PC-3 (cell line): ENCODE measurements at regions of chr17 and their contacts with region 1.

Region 1: GRCh38 chr17:70137451-70138230 is 31.7 kb upstream of the KCNJ2 start:
- DNase-seq: peak; percentile 89
- ATAC-seq: peak; percentile 96
- H3K4me3 ChIP-seq: peak overlapping the region; percentile 67
- H3K27ac ChIP-seq: peak overlapping the region; percentile 22; the same call in 1 of the 2 replicates
- H3K4me1 ChIP-seq: peaks cover 16% of the 10 kb centered on the region
- H3K27me3 ChIP-seq: no peaks in the 10 kb centered on the region
- CTCF ChIP-seq: no peak

Region 2: GRCh38 chr17:69961501-69962145 is 176.0 kb before region 1 on chr17:
- CTCF ChIA-PET with region 1: no interaction called
- POLR2A ChIA-PET with region 1: interaction called, 3 read pairs
- intact Hi-C with region 1: loop called (anchors 5 kb)
- DNase-seq: peak; percentile 34
- ATAC-seq: peak; percentile 92
- H3K4me3 ChIP-seq: peak overlapping the region; percentile 7; the same call in 1 of the 2 replicates
- H3K27ac ChIP-seq: no peak overlapping the region
- H3K4me1 ChIP-seq: peaks cover 10% of the 10 kb centered on the region
- H3K27me3 ChIP-seq: no peaks in the 10 kb centered on the region
- CTCF ChIP-seq: no peak

Region 3: DNA sequence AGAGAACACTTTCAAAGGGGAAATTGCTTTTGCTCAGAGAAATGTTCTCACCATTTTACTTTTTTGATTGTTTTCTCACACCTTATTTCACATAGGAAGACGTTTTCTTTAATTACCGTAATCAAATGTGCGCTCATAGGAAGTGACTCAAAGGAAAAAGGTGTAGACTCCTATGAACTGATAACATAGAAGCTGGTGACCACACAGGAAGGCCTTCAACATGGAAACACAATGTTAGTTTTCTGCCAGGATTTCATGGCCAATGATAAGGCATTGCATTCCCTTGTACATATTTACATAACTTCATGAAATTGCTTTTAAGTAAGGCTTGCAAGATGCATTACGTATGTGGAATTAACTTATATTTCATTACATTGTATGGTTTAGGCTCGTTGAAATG is 103.5 kb before region 1 on chr17:
- CTCF ChIA-PET with region 1: no interaction called
- POLR2A ChIA-PET with region 1: no interaction called
- intact Hi-C with region 1: loop called (anchors 5 kb)
- DNase-seq: no peak
- ATAC-seq: no peak
- H3K4me3 ChIP-seq: no peak overlapping the region
- H3K27ac ChIP-seq: no peak overlapping the region
- H3K4me1 ChIP-seq: no peaks in the 10 kb centered on the region
- H3K27me3 ChIP-seq: no peaks in the 10 kb centered on the region
- CTCF ChIP-seq: no peak